Panc1 (cell line): ENCODE measurements at regions of chr7 and their contacts with region 1.

Region 1: GRCh38 chr7:98375664-98376063 is 25.2 kb downstream of the BAIAP2L1 start:
- DNase-seq: no peak
- ATAC-seq: no peak
- H3K4me3 ChIP-seq: no peak overlapping the region
- H3K27ac ChIP-seq: peak overlapping the region; percentile 32; the same call in 1 of the 2 replicates
- H3K4me1 ChIP-seq: peaks cover 58% of the 10 kb centered on the region
- H3K27me3 ChIP-seq: no peaks in the 10 kb centered on the region
- CTCF ChIP-seq: no peak

Region 2: GRCh38 chr7:97094284-97094930 is 1281.3 kb before region 1 on chr7:
- CTCF ChIA-PET with region 1: no interaction called
- POLR2A ChIA-PET with region 1: interaction called, 12 read pairs
- in situ Hi-C with region 1: no loop called
- intact Hi-C with region 1: no loop called
- DNase-seq: no peak
- ATAC-seq: no peak
- H3K4me3 ChIP-seq: no peak overlapping the region
- H3K27ac ChIP-seq: no peak overlapping the region
- H3K4me1 ChIP-seq: no peaks in the 10 kb centered on the region
- H3K27me3 ChIP-seq: peaks cover 3% of the 10 kb centered on the region; the same call in 1 of the 2 replicates
- CTCF ChIP-seq: no peak